Sigmoid colon (tissue), 7 donors: ENCODE measurements at regions of chr20 and their contacts with region 1.

Region 1: DNA sequence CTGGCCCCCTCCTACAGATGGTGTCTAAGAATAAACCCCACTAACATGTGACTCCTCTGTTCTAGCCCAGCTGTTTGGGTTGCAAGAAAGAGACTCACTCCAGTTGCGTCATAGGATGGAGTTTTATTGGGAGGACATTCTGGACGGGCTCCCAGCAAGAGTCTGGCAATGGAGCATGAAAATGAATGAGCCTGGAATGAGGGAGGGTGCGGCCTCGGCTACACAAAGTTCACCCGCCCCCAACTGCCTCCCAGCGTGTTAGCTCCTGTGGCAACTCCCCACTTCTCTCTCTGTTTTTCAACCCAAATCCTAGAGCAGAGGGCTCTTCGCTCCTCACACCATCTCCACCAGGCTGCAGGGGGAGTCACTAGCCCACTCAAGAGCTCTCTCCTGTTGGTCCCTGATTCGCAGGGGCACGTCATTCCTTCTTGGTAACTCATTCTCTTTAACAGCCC is 5.1 kb upstream of the ADAM33 start:
- DNase-seq: peak; percentile 97
- H3K4me3 ChIP-seq: no peak overlapping the region
- H3K27ac ChIP-seq: peak overlapping the region; percentile 77 to 89 (median 79)
- H3K4me1 ChIP-seq: peaks cover 0 to 38% (median 30%) of the 10 kb centered on the region in 4 donors
- H3K27me3 ChIP-seq: no peaks in the 10 kb centered on the region
- CTCF ChIP-seq: no peak
- EP300 ChIP-seq: peak; percentile 69 to 95 (median 74)
- POLR2A ChIP-seq: no peak

Region 2: DNA sequence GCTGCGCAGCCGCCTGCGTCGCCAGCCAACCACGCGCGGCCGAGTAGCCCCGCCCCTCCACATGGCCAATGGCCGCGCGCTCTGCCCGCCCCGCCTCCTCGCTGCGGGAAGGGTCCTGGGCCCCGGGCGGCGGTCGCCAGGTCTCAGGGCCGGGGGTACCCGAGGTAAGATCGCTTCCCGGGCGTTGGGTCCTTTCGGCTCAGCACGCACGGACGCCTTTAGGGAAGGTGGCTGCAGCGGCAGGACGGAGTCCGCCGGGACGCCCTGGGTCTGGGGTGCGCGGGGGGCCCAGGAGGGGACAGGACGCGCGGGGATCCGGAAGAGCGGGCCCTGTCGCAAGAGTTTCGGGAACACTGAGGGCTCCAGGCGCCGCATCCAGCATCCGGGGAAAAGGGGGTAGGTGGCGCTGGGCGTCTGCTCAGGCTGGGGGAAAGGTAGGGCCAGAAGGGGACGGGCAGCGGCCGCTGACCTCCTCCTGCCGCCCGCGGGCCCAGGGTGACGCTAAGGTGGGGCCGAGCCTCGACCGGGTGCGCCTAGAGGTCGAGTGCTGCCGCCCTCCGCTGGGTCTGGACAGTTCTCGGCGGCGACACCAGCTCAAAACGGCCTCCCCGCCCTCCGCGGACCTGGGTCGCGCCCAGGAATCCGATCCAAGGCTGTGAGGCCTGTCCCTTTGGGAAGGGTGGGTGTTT is 160.0 kb after region 1 on chr20 and contains the start of gene MAVS:
- intact Hi-C with region 1: loop called (anchors 10 kb)
- DNase-seq: peak; percentile 94
- H3K4me3 ChIP-seq: peak within 1 kb of the TSS; percentile 88 to 98 (median 94)
- H3K27ac ChIP-seq: peak within 1 kb of the TSS; percentile 90 to 98 (median 94)
- H3K4me1 ChIP-seq: peaks cover 0 to 25% (median 17%) of the 10 kb centered on the region in 4 donors
- H3K27me3 ChIP-seq: no peaks in the 10 kb centered on the region
- CTCF ChIP-seq: no peak
- EP300 ChIP-seq: no peak
- POLR2A ChIP-seq: peak; percentile 42 to 53
- total RNA-seq, gene MAVS: 15.7 to 29.4 (median 19.7) TPM